SK-N-SH (cell line): ENCODE measurements at regions of chr6 and their contacts with region 1.

Region 1: DNA sequence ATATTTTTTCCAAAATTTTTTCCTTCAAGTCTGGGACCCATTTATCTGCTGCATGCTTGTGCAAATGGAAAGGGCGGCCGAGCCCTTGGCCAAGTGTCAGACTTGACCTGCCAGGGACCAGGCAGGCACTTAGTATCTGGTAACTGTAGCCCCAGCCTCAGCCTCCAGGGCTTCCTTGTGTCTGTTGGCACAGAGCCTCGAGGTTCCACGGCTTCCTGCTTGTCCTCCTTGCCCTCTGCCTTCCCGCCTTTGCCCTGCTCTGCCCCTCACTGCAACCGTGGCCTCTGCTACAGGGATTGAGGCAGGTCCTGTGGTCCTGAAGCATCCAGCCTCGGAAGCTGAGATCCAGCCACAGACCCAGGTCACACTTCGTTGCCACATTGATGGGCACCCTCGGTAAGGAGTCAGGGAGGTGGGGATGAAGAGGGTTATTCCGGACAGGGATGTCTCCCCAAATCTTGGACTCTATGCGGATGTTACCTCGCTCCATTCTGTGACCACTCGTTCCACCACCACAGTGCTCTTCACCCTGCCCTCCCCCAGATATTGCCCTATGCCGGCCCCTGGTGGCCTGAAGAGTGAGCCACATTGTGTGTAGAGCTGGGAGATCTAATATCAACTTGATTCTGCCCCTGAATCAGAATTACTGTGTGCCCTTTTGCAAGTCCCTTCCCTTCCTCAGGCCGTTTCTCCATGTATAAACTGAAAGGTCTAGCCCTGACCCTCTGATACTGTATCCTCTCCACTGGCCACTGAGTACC is 41.5 kb upstream of the SRF start:
- DNase-seq: peak; percentile 84
- H3K4me3 ChIP-seq: no peak overlapping the region
- H3K27ac ChIP-seq: peak overlapping the region; percentile 75 to 99
- H3K4me1 ChIP-seq: peaks cover 25 to 38% of the 10 kb centered on the region in 2 experiments; a peak in 3 of 4 replicates
- H3K27me3 ChIP-seq: no peaks in the 10 kb centered on the region
- CTCF ChIP-seq: peak; percentile 75
- EP300 ChIP-seq: no peak
- RAD21 ChIP-seq: peak; percentile 90

Region 2: GRCh38 chr6:42831237-42831636 is 298.4 kb before region 1 on chr6:
- CTCF ChIA-PET with region 1: no interaction called
- POLR2A ChIA-PET with region 1: no interaction called
- DNase-seq: no peak
- H3K4me3 ChIP-seq: no peak overlapping the region
- H3K27ac ChIP-seq: no peak overlapping the region
- H3K4me1 ChIP-seq: no peaks in the 10 kb centered on the region
- H3K27me3 ChIP-seq: no peaks in the 10 kb centered on the region
- CTCF ChIP-seq: no peak
- EP300 ChIP-seq: no peak
- RAD21 ChIP-seq: no peak

Region 3: GRCh38 chr6:42923666-42924065 is 205.9 kb before region 1 on chr6:
- CTCF ChIA-PET with region 1: no interaction called
- POLR2A ChIA-PET with region 1: no interaction called
- DNase-seq: no peak
- H3K4me3 ChIP-seq: no peak overlapping the region
- H3K27ac ChIP-seq: no peak overlapping the region
- H3K4me1 ChIP-seq: no peaks in the 10 kb centered on the region; a peak in 1 of 4 replicates
- H3K27me3 ChIP-seq: no peaks in the 10 kb centered on the region
- CTCF ChIP-seq: no peak
- EP300 ChIP-seq: no peak
- RAD21 ChIP-seq: no peak

Region 4: DNA sequence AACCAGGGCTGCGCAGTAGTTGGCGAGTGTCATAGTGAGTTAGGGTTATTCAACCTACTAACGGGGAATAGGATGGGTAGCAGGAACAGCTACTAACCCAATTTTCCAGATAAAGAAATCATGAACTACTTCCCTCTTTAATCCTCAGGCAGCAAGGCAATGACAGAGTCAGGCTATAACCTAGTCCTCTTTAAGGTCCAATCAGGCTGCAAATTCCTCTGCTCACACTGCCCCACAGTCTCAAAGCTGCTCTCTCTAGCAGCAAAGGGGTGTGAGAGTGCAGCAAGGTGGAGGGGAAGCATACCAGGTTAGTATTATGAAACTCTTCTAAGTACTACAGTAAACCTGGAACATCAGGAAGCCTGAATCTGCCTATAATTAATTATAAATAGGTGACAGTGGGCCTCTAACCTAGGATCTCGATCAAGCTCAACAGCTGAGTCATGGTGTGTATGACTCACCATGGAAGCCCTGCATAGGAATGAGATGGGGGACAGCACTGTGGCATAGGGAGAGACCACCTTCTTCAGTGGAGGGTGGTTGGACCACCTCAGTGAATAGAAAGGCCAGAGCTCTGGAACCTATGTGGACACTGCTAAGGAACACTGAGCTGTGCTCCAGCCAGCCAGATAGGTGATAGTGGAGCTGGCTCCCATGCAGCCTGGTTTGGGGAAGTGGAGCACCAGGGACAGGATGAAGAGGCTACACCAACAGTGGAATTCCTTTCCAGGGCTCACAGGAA is 158.6 kb before region 1 on chr6:
- CTCF ChIA-PET with region 1: no interaction called
- POLR2A ChIA-PET with region 1: no interaction called
- DNase-seq: no peak
- H3K4me3 ChIP-seq: no peak overlapping the region
- H3K27ac ChIP-seq: peak overlapping the region in 1 of 2 experiments; percentile 44; a peak in 2 of 4 replicates
- H3K4me1 ChIP-seq: peaks cover 0 to 9% of the 10 kb centered on the region in 2 experiments; a peak in 3 of 4 replicates
- H3K27me3 ChIP-seq: no peaks in the 10 kb centered on the region
- CTCF ChIP-seq: no peak
- EP300 ChIP-seq: no peak
- RAD21 ChIP-seq: no peak

Region 5: GRCh38 chr6:42988486-42989020 is 141.1 kb before region 1 on chr6:
- CTCF ChIA-PET with region 1: no interaction called
- POLR2A ChIA-PET with region 1: no interaction called
- DNase-seq: no peak
- H3K4me3 ChIP-seq: no peak overlapping the region
- H3K27ac ChIP-seq: no peak overlapping the region
- H3K4me1 ChIP-seq: peaks cover 17 to 20% of the 10 kb centered on the region in 2 experiments; a peak in 3 of 4 replicates
- H3K27me3 ChIP-seq: no peaks in the 10 kb centered on the region
- CTCF ChIP-seq: no peak
- EP300 ChIP-seq: no peak
- RAD21 ChIP-seq: no peak

Region 6: GRCh38 chr6:43070028-43070632 is 59.5 kb before region 1 on chr6:
- CTCF ChIA-PET with region 1: interaction called, 32 read pairs
- POLR2A ChIA-PET with region 1: interaction called, 5 read pairs
- DNase-seq: peak; percentile 80
- H3K4me3 ChIP-seq: no peak overlapping the region
- H3K27ac ChIP-seq: no peak overlapping the region
- H3K4me1 ChIP-seq: peaks cover 0 to 3% of the 10 kb centered on the region in 2 experiments; a peak in 1 of 4 replicates
- H3K27me3 ChIP-seq: no peaks in the 10 kb centered on the region
- CTCF ChIP-seq: peak; percentile 79
- EP300 ChIP-seq: no peak
- RAD21 ChIP-seq: peak; percentile 84

Region 7: DNA sequence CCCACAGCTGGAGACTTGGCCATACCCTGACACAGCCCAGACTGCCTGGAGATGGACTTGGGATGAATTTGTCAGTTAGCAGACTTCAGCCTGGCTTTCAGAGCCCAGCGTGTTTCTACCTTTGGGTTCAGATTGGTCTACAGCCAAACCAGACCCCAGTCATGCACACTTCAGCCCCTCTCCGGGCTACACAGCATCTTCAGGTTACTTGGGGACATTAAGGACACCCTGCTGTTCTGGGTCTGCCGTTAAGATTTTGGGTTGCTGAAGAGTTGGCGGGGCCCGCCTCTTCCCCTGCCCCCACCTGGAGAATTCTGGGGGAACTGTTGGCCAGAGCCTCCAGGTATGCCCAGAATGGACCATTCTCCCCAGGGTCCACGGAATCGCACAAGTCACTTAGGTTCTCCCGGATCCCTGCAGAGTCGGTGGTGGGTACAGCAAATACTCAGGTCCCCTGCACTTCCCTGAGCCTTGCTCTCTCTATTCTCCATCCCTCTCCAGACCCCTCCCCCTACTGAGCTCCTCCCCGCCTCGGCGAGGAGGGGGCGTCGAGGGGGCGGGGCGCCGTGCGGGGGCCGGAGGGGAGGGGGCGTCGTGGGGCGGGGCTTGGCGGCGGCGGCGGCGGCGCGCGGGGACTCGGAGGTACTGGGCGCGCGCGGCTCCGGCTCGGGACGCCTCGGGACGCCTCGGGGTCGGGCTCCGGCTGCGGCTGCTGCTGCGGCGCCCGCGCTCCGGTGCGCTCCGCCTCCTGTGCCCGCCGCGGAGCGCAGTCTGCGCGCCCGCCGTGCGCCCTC is 53.7 kb before region 1 on chr6 and contains the start of gene PTK7:
- CTCF ChIA-PET with region 1: interaction called, 32 read pairs
- POLR2A ChIA-PET with region 1: interaction called, 5 read pairs
- DNase-seq: peak; percentile 98
- H3K4me3 ChIP-seq: peak within 1 kb of the TSS; percentile 81 to 90
- H3K27ac ChIP-seq: peak within 1 kb of the TSS; percentile 71 to 86
- H3K4me1 ChIP-seq: peaks cover 14 to 23% of the 10 kb centered on the region in 2 experiments; a peak in 2 of 4 replicates
- H3K27me3 ChIP-seq: no peaks in the 10 kb centered on the region
- CTCF ChIP-seq: no peak
- EP300 ChIP-seq: no peak
- RAD21 ChIP-seq: no peak
- polyA plus RNA-seq, gene PTK7: 93.7 and 105 TPM in 2 replicates

Region 8: GRCh38 chr6:43107344-43108062 is 22.1 kb before region 1 on chr6:
- CTCF ChIA-PET with region 1: interaction called, 13 read pairs
- POLR2A ChIA-PET with region 1: no interaction called
- DNase-seq: no peak
- H3K4me3 ChIP-seq: no peak overlapping the region
- H3K27ac ChIP-seq: peak overlapping the region in 1 of 2 experiments; percentile 8; a peak in 1 of 4 replicates
- H3K4me1 ChIP-seq: peaks cover 0 to 10% of the 10 kb centered on the region in 2 experiments; a peak in 1 of 4 replicates
- H3K27me3 ChIP-seq: no peaks in the 10 kb centered on the region
- CTCF ChIP-seq: no peak
- EP300 ChIP-seq: no peak
- RAD21 ChIP-seq: no peak

Region 9: GRCh38 chr6:43113431-43114260 is 16.0 kb before region 1 on chr6:
- CTCF ChIA-PET with region 1: interaction called, 13 read pairs
- POLR2A ChIA-PET with region 1: interaction called, 17 read pairs
- DNase-seq: peak; percentile 80
- H3K4me3 ChIP-seq: no peak overlapping the region
- H3K27ac ChIP-seq: peak overlapping the region; percentile 76; a peak in 3 of 4 replicates
- H3K4me1 ChIP-seq: peaks cover 18 to 32% of the 10 kb centered on the region in 2 experiments; a peak in 3 of 4 replicates
- H3K27me3 ChIP-seq: no peaks in the 10 kb centered on the region
- CTCF ChIP-seq: no peak
- EP300 ChIP-seq: no peak
- RAD21 ChIP-seq: no peak